Heart right ventricle (tissue), 16 donors: ENCODE measurements at regions of chr10 and their contacts with region 1.

Region 1: GRCh38 chr10:122154545-122155366 is 116.3 kb upstream of the BTBD16 start:
- DNase-seq: peak; percentile 36 to 60
- ATAC-seq: peak in 6 of 8 donors; percentile 13 to 35 (median 28)
- H3K4me3 ChIP-seq: peak overlapping the region in 2 of 10 donors; percentile 9 to 23
- H3K27ac ChIP-seq: peak overlapping the region in 9 of 10 donors; percentile 25 to 90 (median 61)
- H3K4me1 ChIP-seq: peaks cover 22 to 83% (median 52%) of the 10 kb centered on the region in 9 donors
- H3K27me3 ChIP-seq: no peaks in the 10 kb centered on the region
- CTCF ChIP-seq: peak in 1 of 9 donors; percentile 14

Region 2: DNA sequence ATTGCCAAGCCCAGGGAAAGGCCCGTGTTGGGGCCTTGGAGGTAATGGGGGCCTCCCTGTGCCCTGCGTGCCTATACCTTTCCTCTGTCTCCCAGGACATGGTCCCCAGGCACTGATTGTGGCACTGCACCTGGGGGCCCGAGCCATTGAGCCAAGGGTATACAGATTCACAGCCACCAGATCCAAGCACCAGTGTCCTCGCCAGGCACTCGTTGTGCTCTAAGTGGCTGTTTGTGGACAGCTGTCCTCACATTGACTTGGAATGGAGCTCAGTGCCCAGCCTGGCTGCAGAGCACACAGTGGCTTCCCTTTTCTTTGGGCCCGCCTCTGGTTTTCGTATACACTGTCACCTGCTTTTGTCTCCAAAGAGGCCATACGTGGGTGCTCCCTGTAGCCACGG is 44.3 kb after region 1 on chr10:
- intact Hi-C with region 1: loop called in 1 of 10 experiments (anchors 5 kb)
- DNase-seq: peak; percentile 41 to 54
- ATAC-seq: peak; percentile 76 to 95 (median 90)
- H3K4me3 ChIP-seq: no peak overlapping the region
- H3K27ac ChIP-seq: peak overlapping the region in 9 of 10 donors; percentile 9 to 63 (median 52)
- H3K4me1 ChIP-seq: peaks cover 0 to 35% (median 15%) of the 10 kb centered on the region in 9 donors
- H3K27me3 ChIP-seq: no peaks in the 10 kb centered on the region
- CTCF ChIP-seq: no peak

Region 3: DNA sequence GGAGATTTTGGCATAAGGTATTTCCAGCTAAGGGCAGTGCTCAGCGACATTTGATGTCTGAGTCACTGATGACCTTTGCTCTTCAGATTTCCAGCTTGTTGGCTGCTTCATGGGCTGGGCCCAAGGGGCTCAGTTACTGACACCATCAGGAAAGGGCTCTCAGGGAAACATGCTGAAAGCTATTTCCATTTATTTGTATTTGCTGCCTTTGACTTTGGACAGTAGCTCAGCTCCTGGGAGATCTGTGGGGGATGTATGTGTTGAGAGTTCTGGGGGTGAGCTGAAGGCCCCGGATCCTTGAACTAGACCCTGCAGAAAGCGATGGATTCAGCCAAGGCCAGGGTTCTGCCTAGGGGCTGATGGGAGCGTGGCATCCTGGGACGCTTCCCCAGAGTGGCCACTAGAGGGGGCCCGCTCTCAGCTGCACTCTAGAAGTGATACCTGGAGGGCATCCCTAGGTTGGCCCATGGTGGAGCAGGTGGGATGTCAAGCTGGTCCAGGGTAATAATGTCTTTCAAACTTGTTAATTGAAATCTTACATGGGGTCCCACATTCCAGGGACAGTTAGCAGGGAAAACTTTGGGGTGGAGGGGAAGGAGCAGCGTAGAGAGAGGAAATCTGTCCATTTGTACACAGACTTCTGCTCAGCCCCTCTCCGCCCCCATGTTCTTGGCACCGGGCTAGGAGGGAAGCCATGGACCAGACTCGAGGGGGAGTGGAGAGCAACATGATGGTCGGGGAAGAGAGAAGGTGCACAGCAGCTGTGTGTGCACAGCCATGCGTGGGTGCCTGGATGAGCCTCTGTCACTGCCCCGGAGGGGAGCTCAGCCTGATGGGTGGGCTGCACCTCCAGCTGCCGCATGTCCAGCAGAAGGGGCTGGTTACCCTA is 113.3 kb after region 1 on chr10:
- intact Hi-C with region 1: loop called in 3 of 10 experiments (anchors 10 kb)
- DNase-seq: peak in 1 of 2 donors; percentile 48
- ATAC-seq: peak; percentile 43 to 78 (median 70)
- H3K4me3 ChIP-seq: no peak overlapping the region
- H3K27ac ChIP-seq: no peak overlapping the region
- H3K4me1 ChIP-seq: peaks cover 0 to 42% (median 8%) of the 10 kb centered on the region in 9 donors
- H3K27me3 ChIP-seq: no peaks in the 10 kb centered on the region
- CTCF ChIP-seq: peak; percentile 88 to 95 (median 92)

Region 4: DNA sequence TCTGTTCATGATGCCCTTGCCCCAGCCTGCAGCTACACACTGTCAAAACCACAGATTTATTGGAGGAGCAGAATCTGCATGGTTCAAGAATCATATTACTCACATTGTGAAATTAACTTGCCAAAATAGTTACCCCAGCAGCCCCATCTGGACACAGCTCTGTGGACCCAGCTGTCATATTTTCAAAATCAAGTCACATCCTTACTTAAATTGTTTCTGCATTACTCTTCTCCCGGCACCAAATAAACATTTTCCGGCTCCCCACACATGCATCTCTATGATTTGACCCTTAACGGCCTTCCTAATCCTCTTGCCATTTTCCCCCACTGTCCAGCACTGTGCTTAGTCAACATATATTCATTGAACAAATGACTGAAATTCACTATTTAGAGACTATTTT is 1467.6 kb after region 1 on chr10:
- intact Hi-C with region 1: no loop called
- DNase-seq: no peak
- ATAC-seq: no peak
- H3K4me3 ChIP-seq: no peak overlapping the region
- H3K27ac ChIP-seq: no peak overlapping the region
- H3K4me1 ChIP-seq: no peaks in the 10 kb centered on the region
- H3K27me3 ChIP-seq: peaks cover 0 to 10% (median 6%) of the 10 kb centered on the region in 7 donors
- CTCF ChIP-seq: no peak